Tibial artery (tissue), 4 donors: ENCODE measurements at regions of chr1 and their contacts with region 1.

Region 1: GRCh38 chr1:16055613-16056520 is 12.3 kb downstream of the CLCNKB start:
- DNase-seq: peak; percentile 83 to 87
- H3K4me3 ChIP-seq: no peak overlapping the region
- H3K27ac ChIP-seq: no peak overlapping the region
- H3K4me1 ChIP-seq: peaks cover 0 to 10% (median 5%) of the 10 kb centered on the region in 4 donors
- H3K27me3 ChIP-seq: peaks cover 0 to 4% of the 10 kb centered on the region in 2 donors
- CTCF ChIP-seq: peak; percentile 80 to 84

Region 2: GRCh38 chr1:16009030-16009709 is 46.7 kb before region 1 on chr1:
- intact Hi-C with region 1: loop called (anchors 2 kb)
- DNase-seq: peak; percentile 74 to 87
- H3K4me3 ChIP-seq: no peak overlapping the region
- H3K27ac ChIP-seq: peak overlapping the region in 1 of 2 donors; percentile 7
- H3K4me1 ChIP-seq: peaks cover 0 to 24% (median 19%) of the 10 kb centered on the region in 4 donors
- H3K27me3 ChIP-seq: no peaks in the 10 kb centered on the region
- CTCF ChIP-seq: peak; percentile 97 to 99

Region 3: DNA sequence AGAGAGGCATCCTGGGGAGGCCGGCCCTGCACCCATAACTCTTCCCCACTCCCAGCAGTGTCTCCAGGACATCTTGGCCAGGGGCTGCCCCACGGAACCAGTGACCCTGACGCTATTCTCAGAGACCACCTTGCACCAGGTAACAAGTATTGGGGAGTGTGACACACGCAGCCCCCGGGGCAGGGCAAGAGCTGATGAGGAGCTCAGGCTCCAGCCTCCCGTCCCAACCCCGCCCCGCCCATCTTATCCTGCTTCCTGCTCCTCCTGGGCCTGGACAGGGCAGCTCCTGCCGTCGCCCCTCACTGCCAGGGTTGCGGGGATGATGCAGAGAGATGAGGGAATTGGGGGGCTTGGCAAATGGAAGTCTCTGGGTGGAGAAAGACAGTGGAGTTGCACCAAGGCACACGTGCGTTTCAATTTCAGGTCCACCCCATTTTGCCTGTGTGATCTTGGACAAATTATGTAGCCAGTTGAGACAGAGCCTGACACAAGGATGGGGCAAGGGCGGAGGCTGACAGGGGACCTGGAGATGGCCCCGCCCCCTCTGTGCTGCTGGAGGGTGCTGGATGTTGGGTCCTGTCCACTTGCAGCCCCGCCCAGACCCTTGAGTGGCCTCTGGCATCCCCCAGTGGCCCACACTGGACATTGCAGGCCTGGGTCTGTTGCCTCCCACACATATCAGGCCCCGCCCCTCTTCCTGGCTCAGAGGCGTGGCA is 23.3 kb before region 1 on chr1:
- intact Hi-C with region 1: loop called (anchors 1 kb)
- DNase-seq: peak; percentile 86 to 92
- H3K4me3 ChIP-seq: no peak overlapping the region
- H3K27ac ChIP-seq: no peak overlapping the region
- H3K4me1 ChIP-seq: peaks cover 0 to 12% (median 9%) of the 10 kb centered on the region in 4 donors
- H3K27me3 ChIP-seq: no peaks in the 10 kb centered on the region
- CTCF ChIP-seq: peak; percentile 100